ENCODE measurements at regions of chr3 and their contacts with region 1.

Region 1: DNA sequence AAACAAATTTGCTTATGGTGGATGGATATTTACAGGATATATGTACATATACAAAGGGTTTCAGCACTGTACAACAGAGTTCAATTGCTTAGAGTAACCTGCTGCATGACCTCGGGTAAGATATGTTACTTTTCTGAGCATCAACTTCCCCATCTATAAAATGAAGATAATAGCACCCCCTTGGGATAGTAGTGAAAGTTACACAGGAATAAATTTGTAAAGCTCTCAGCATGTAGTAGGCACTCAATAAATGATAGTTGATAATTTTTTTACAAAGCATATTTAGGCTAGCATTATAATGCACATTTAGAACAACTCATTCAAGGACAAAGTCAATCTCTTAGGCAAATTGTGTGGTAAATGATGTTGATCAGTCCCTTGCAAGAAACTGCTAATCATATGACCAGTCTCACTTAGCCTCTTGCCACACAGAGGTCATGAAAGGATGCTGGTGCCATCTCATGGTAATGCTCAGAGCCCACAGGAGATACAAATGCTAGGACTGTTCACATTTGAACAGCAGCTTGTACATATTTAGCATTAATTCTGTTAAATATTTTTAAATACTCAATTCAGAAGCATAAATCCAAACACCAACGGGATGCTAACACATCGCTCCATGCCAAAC is 123.9 kb downstream of the MAGI1 start:
- DNase-seq: no peak
- H3K4me3 ChIP-seq: no peak overlapping the region
- H3K27ac ChIP-seq: no peak overlapping the region
- H3K4me1 ChIP-seq: no peaks in the 10 kb centered on the region
- H3K27me3 ChIP-seq: no peaks in the 10 kb centered on the region
- CTCF ChIP-seq: peak; percentile 15 to 26

Region 2: GRCh38 chr3:65785065-65785645 is 129.7 kb before region 1 on chr3:
- CTCF ChIA-PET with region 1: no interaction called
- dilution Hi-C with region 1: no loop called
- in situ Hi-C with region 1: loop called in 1 of 2 experiments (anchors 10 kb)
- intact Hi-C with region 1: loop called (anchors 1 kb)
- DNase-seq: peak; percentile 9
- H3K4me3 ChIP-seq: no peak overlapping the region
- H3K27ac ChIP-seq: no peak overlapping the region
- H3K4me1 ChIP-seq: no peaks in the 10 kb centered on the region
- H3K27me3 ChIP-seq: no peaks in the 10 kb centered on the region
- CTCF ChIP-seq: peak; percentile 57 to 69

Region 3: GRCh38 chr3:65793495-65794199 is 121.2 kb before region 1 on chr3:
- CTCF ChIA-PET with region 1: no interaction called
- dilution Hi-C with region 1: no loop called
- in situ Hi-C with region 1: loop called in 1 of 2 experiments (anchors 10 kb)
- intact Hi-C with region 1: no loop called
- DNase-seq: peak; percentile 37
- H3K4me3 ChIP-seq: no peak overlapping the region
- H3K27ac ChIP-seq: no peak overlapping the region
- H3K4me1 ChIP-seq: no peaks in the 10 kb centered on the region
- H3K27me3 ChIP-seq: no peaks in the 10 kb centered on the region
- CTCF ChIP-seq: no peak

Region 4: DNA sequence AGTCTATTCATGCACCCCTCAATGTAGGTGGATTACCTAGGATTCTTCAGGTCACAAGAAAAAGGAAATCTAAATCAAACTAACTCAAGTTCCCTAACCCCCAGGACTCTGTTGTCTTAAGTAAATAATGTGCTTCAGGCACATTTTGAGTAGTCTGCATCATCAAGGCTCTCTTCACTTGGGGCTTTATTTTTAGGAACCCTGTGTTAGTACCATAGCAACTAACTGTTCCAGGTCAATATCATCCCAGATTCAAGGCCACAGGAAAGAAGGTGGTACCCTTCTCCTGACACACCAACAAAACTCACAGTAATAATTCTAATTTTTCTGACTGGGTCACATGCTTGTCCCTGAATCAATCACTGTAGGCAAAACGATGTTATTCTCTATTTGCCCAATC is 94.3 kb before region 1 on chr3:
- CTCF ChIA-PET with region 1: no interaction called
- dilution Hi-C with region 1: no loop called
- in situ Hi-C with region 1: no loop called
- intact Hi-C with region 1: no loop called
- DNase-seq: no peak
- H3K4me3 ChIP-seq: no peak overlapping the region
- H3K27ac ChIP-seq: no peak overlapping the region
- H3K4me1 ChIP-seq: no peaks in the 10 kb centered on the region
- H3K27me3 ChIP-seq: no peaks in the 10 kb centered on the region
- CTCF ChIP-seq: no peak

Region 5: GRCh38 chr3:65831733-65832425 is 83.0 kb before region 1 on chr3:
- CTCF ChIA-PET with region 1: no interaction called
- dilution Hi-C with region 1: loop called (anchors 5 kb)
- in situ Hi-C with region 1: no loop called
- intact Hi-C with region 1: no loop called
- DNase-seq: peak; percentile 56
- H3K4me3 ChIP-seq: no peak overlapping the region
- H3K27ac ChIP-seq: no peak overlapping the region
- H3K4me1 ChIP-seq: peaks cover 47% of the 10 kb centered on the region
- H3K27me3 ChIP-seq: no peaks in the 10 kb centered on the region
- CTCF ChIP-seq: no peak

Region 6: GRCh38 chr3:66138336-66139313 is 223.8 kb after region 1 on chr3:
- CTCF ChIA-PET with region 1: no interaction called
- dilution Hi-C with region 1: no loop called
- in situ Hi-C with region 1: no loop called
- intact Hi-C with region 1: loop called (anchors 1 kb)
- DNase-seq: peak; percentile 49
- H3K4me3 ChIP-seq: no peak overlapping the region
- H3K27ac ChIP-seq: no peak overlapping the region
- H3K4me1 ChIP-seq: peaks cover under 1% of the 10 kb centered on the region
- H3K27me3 ChIP-seq: no peaks in the 10 kb centered on the region
- CTCF ChIP-seq: peak; percentile 89 to 90